ENCODE measurements at regions of chr10 and their contacts with region 1.

Region 1: GRCh38 chr10:51422311-51423120 is 276.9 kb downstream of the CSTF2T start:
- DNase-seq: peak in 4 of 5 donors; percentile 23 to 60 (median 32)
- H3K4me3 ChIP-seq: no peak overlapping the region
- H3K27ac ChIP-seq: no peak overlapping the region
- H3K4me1 ChIP-seq: no peaks in the 10 kb centered on the region
- H3K27me3 ChIP-seq: no peaks in the 10 kb centered on the region
- CTCF ChIP-seq: peak in 2 of 3 donors; percentile 39 to 48
- EP300 ChIP-seq: no peak
- POLR2A ChIP-seq: no peak

Region 2: GRCh38 chr10:51001587-51001986 is 420.9 kb before region 1 on chr10:
- intact Hi-C with region 1: loop called in 1 of 4 experiments (anchors 10 kb)
- DNase-seq: no peak
- H3K4me3 ChIP-seq: no peak overlapping the region
- H3K27ac ChIP-seq: no peak overlapping the region
- H3K4me1 ChIP-seq: no peaks in the 10 kb centered on the region
- H3K27me3 ChIP-seq: no peaks in the 10 kb centered on the region
- CTCF ChIP-seq: peak in 2 of 3 donors; percentile 63 to 72
- EP300 ChIP-seq: no peak
- POLR2A ChIP-seq: no peak

Measured in ovary (tissue), 10 donors.